Breast epithelium (tissue), 4 donors: ENCODE measurements at regions of chr14 and their contacts with region 1.

Region 1: DNA sequence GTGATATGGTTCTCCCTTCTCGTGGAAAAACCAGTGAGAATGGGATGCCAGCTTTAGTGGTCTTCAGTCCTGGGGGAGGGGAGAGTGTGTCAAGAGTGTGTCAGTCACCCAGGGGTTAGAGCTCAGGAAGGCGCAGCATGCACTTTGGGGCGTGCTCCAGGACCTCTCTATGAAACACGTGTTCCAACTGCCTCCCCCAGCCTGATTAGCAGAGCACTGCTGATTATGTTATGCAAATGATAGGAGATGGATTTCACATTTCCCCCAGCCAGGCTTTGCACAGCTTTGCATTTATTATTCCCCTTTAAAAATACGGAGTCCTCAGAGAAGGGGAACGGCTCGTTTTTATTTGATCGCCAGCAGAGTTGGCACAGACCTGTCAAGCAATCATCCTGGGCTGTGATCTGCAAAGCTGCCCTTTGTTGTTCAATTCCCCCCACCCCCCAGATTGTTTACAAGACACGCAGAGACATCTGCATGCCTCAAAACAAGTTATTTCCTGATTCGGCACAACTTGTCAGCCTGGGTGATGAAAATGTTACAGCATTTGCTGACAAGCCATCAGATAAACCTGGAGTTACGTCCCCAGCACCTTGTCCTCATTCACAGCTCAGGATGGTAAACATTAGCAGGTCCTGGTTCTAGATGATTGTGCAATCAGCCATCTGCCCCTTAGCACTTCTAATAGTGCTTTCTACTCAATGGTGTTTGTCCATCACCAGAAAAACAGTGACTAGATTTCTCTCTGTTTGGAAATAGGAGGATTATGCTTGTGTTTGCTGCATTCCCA is 196.5 kb downstream of the NOVA1 start:
- DNase-seq: no peak
- H3K4me3 ChIP-seq: no peak overlapping the region
- H3K27ac ChIP-seq: no peak overlapping the region
- H3K4me1 ChIP-seq: no peaks in the 10 kb centered on the region
- H3K27me3 ChIP-seq: no peaks in the 10 kb centered on the region
- CTCF ChIP-seq: no peak
- POLR2A ChIP-seq: no peak

Region 2: GRCh38 chr14:26463136-26463535 is 61.8 kb after region 1 on chr14:
- intact Hi-C with region 1: loop called (anchors 2 kb)
- DNase-seq: no peak
- H3K4me3 ChIP-seq: no peak overlapping the region
- H3K27ac ChIP-seq: no peak overlapping the region
- H3K4me1 ChIP-seq: no peaks in the 10 kb centered on the region
- H3K27me3 ChIP-seq: no peaks in the 10 kb centered on the region
- CTCF ChIP-seq: no peak
- POLR2A ChIP-seq: no peak

Region 3: DNA sequence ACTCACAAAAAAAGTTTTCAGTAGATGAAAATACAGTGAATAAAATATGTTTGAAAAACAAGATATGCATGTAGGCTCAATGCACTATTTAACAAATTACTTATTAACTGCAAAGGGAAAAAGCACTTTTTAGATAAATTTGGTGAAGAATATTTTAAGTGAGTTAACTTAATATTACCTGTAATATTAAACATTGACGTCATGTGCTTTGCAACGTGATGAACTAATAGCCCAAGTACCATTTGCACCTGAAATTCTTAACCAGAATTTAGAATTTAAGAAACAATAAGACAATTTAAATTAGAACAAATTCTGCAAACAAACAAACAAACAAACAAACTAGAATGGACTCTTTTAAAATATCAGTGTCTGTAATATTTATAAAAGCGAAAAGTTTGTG is 855.4 kb after region 1 on chr14:
- intact Hi-C with region 1: no loop called
- DNase-seq: no peak
- H3K4me3 ChIP-seq: no peak overlapping the region
- H3K27ac ChIP-seq: no peak overlapping the region
- H3K4me1 ChIP-seq: no peaks in the 10 kb centered on the region
- H3K27me3 ChIP-seq: no peaks in the 10 kb centered on the region
- CTCF ChIP-seq: no peak
- POLR2A ChIP-seq: no peak